ENCODE measurements at regions of chr4 and their contacts with region 1.

Region 1: GRCh38 chr4:175280802-175281201 is 362.6 kb downstream of the ADAM29 start:
- DNase-seq: no peak
- ATAC-seq: no peak

Region 2: DNA sequence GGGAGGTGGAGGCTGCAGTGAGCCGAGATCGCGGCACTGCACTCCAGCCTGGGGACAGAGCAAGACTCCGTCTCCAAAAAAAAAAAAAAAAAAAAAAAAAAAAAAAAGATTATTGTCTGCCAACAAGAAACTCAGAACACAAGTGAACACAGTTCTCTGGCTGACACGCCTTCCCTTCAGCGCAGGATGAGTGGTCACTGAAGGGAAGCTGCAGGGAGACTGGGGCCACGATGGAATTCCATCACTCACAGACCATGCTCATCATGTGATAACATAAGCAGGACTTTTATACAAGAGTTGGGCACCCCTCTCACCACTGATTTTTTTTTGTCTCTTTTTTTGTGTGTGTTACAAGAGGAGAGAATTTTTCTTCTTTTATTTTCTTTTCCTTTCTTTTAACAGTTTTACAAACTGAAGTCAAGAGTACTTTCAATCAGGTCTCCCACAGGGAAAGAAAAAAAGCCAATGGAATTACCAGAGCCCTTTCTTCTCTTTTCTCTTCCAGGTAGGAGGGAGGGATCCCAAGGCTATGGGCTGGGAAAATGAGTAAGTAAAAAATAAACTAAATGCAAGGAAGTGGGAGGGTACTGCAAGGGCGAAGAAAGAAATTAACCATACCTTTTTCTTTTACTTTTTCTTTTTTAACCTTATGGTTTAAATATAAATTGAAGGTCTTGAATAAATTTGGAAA is 95.6 kb after region 1 on chr4:
- intact Hi-C with region 1: loop called (anchors 5 kb)
- DNase-seq: no peak
- ATAC-seq: no peak